ENCODE measurements at regions of chr6 and their contacts with region 1.

Region 1: GRCh38 chr6:46993846-46994245 is 48.3 kb downstream of the ADGRF1 start:
- DNase-seq: no peak
- H3K4me3 ChIP-seq: no peak overlapping the region
- H3K27ac ChIP-seq: no peak overlapping the region
- H3K4me1 ChIP-seq: peaks cover 18 to 24% of the 10 kb centered on the region in 2 donors
- H3K27me3 ChIP-seq: no peaks in the 10 kb centered on the region
- CTCF ChIP-seq: no peak
- POLR2A ChIP-seq: no peak

Region 2: DNA sequence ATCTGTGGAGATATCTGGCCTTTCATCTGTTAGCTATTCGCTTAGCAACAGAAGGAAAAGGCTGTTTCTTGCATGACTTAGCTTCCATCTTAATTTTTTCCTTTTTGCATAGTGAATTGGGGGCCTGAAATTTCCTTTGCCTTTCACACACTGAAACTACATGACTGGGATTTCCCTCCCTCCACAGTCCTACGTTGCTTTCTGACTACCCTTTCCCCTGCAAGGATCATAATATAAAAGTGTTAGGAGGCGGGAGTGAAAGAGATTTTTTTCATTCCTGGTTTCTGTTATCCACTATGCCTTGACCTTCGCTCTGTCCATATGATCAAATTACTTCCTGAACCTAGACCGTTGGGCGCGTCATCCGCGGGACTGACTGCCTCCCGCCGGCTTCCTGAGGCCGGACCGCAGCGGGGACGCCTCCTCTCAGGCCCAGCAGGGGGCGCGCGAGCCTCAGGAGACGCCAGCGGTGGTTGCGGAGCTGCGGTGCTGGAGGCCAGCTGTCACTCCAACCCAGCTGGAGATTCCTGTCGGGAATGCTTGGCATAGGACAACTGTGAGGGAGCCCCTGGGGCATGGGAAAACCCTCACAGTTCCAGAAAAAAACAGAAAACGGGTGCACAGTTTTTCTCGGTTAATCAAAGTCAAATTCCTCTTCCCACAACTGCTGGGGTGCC is 145.0 kb before region 1 on chr6:
- intact Hi-C with region 1: loop called (anchors 5 kb)
- DNase-seq: peak; percentile 81 to 85
- H3K4me3 ChIP-seq: no peak overlapping the region
- H3K27ac ChIP-seq: no peak overlapping the region
- H3K4me1 ChIP-seq: peaks cover 0 to 10% of the 10 kb centered on the region in 2 donors
- H3K27me3 ChIP-seq: no peaks in the 10 kb centered on the region
- CTCF ChIP-seq: peak; percentile 78 to 97 (median 96)
- POLR2A ChIP-seq: no peak

Region 3: GRCh38 chr6:47221565-47221964 is 227.7 kb after region 1 on chr6:
- intact Hi-C with region 1: no loop called
- DNase-seq: no peak
- H3K4me3 ChIP-seq: no peak overlapping the region
- H3K27ac ChIP-seq: no peak overlapping the region
- H3K4me1 ChIP-seq: peaks cover 0 to 4% of the 10 kb centered on the region in 2 donors
- H3K27me3 ChIP-seq: no peaks in the 10 kb centered on the region
- CTCF ChIP-seq: no peak
- POLR2A ChIP-seq: no peak

Measured in thyroid gland (tissue), 4 donors.